Gastrocnemius medialis (tissue), 4 donors: ENCODE measurements at regions of chr7 and their contacts with region 1.

Region 1: GRCh38 chr7:7861211-7861633 is 107.4 kb upstream of the GLCCI1 start:
- DNase-seq: peak in 1 of 2 donors; percentile 37
- ATAC-seq: peak; percentile 83
- H3K4me3 ChIP-seq: no peak overlapping the region
- H3K27ac ChIP-seq: peak overlapping the region in 2 of 4 donors; percentile 35 to 78
- H3K4me1 ChIP-seq: peaks cover 48 to 57% of the 10 kb centered on the region in 2 donors
- H3K27me3 ChIP-seq: no peaks in the 10 kb centered on the region
- CTCF ChIP-seq: no peak
- POLR2A ChIP-seq: no peak

Region 2: DNA sequence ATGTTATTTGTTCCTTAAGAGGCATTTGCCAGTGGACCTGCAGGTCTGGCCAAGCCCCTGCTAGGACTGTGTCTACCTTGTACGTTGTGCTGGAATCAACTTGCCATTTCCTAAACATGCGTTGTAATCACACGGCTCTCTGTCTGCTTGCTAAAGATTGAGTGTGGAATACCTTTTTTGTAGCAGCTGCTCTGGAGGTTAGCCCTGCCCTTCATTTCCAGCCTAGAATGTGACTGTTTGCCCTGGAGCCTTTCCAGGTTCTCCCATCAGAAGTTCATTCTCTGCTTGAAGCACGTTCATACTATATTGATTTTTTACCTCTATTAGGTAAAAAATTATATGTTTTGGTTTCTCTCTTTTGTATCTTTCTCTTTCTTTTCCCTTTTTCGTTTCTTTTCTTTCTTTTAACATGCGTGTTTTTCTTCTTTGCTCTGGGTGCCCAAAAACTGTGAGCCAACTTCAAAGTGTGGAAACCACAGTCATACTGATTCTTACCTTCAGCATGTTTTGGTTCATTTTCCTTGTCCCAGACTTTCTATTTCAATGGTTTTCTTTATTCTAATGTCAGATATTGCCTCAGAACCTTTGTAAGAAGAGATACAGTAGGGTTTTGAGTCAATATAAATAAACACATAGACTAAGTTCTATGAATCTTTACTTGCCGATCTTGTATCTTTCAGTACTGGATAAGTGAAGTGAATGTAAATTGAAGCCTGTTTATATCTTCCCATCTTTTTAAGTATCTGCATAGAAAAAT is 30.9 kb before region 1 on chr7:
- in situ Hi-C with region 1: no loop called
- intact Hi-C with region 1: no loop called
- DNase-seq: no peak
- ATAC-seq: peak in 1 of 2 donors; percentile 27
- H3K4me3 ChIP-seq: no peak overlapping the region
- H3K27ac ChIP-seq: no peak overlapping the region
- H3K4me1 ChIP-seq: peaks cover 5 to 8% of the 10 kb centered on the region in 2 donors
- H3K27me3 ChIP-seq: no peaks in the 10 kb centered on the region
- CTCF ChIP-seq: no peak
- POLR2A ChIP-seq: no peak

Region 3: GRCh38 chr7:7911371-7912155 is 50.3 kb after region 1 on chr7:
- in situ Hi-C with region 1: no loop called
- intact Hi-C with region 1: loop called (anchors 5 kb)
- DNase-seq: no peak
- ATAC-seq: no peak
- H3K4me3 ChIP-seq: no peak overlapping the region
- H3K27ac ChIP-seq: no peak overlapping the region
- H3K4me1 ChIP-seq: peaks cover 5 to 20% of the 10 kb centered on the region in 2 donors
- H3K27me3 ChIP-seq: no peaks in the 10 kb centered on the region
- CTCF ChIP-seq: no peak
- POLR2A ChIP-seq: no peak

Region 4: DNA sequence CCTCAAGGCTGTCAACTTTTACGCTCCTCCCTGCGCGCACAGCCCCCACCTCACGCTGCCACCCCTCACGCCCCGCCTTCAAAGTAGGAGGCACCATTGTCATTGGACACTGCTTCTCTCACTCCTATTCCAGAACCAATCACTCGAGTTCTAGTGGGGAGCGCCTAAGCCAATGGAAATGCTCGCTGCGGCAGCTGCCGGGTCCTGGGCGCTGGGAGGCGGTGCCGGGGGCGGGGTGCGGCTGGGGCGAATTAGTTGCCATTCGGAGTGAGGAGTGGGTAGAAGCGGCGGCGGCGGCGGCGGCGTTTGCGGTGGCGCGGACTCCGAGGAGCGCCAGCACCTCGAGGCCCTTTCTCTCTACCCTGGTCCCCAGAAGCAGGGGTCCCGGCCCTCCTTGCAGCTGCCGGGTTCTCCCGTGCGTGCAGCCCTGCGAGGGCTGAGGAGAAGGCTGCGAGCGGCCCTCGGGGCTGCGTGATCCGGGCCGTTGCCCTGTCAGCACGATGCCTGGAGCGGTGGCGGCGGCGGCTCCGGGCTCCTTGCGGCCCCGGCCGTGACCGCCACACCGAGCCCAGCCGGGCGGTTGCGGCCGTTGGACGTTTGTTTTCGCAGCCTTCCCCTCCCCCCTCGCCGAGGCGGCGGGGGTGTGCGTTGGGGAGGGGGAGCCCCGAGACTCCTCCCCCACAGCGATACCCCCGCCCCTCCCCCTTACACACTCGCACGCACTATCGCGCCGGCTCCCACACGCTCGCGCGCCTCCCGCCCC is 107.5 kb after region 1 on chr7 and contains the start of gene GLCCI1:
- in situ Hi-C with region 1: no loop called
- intact Hi-C with region 1: loop called (anchors 5 kb)
- DNase-seq: peak; percentile 97
- ATAC-seq: peak; percentile 96 to 97
- H3K4me3 ChIP-seq: peak within 1 kb of the TSS; percentile 83 to 93 (median 86)
- H3K27ac ChIP-seq: peak within 1 kb of the TSS; percentile 91 to 98 (median 93)
- H3K4me1 ChIP-seq: peaks cover 13 to 22% of the 10 kb centered on the region in 2 donors
- H3K27me3 ChIP-seq: no peaks in the 10 kb centered on the region
- CTCF ChIP-seq: no peak
- POLR2A ChIP-seq: peak; percentile 79 to 95
- total RNA-seq, gene GLCCI1: 1.2 to 6.1 (median 2.6) TPM

Region 5: GRCh38 chr7:8327199-8327598 is 466.0 kb after region 1 on chr7:
- in situ Hi-C with region 1: no loop called
- intact Hi-C with region 1: no loop called
- DNase-seq: no peak
- ATAC-seq: no peak
- H3K4me3 ChIP-seq: no peak overlapping the region
- H3K27ac ChIP-seq: no peak overlapping the region
- H3K4me1 ChIP-seq: no peaks in the 10 kb centered on the region
- H3K27me3 ChIP-seq: no peaks in the 10 kb centered on the region
- CTCF ChIP-seq: no peak
- POLR2A ChIP-seq: no peak